SK-N-SH (cell line): ENCODE measurements at regions of chr5 and their contacts with region 1.

Region 1: GRCh38 chr5:138449501-138450239 is 10.8 kb downstream of the REEP2 start:
- DNase-seq: peak; percentile 96
- H3K4me3 ChIP-seq: peak overlapping the region in 1 of 2 experiments; percentile 34; a peak in 1 of 4 replicates
- H3K27ac ChIP-seq: peak overlapping the region in 1 of 2 experiments; percentile 8; a peak in 1 of 4 replicates
- H3K4me1 ChIP-seq: peaks cover 13 to 19% of the 10 kb centered on the region in 2 experiments; a peak in 3 of 4 replicates
- H3K27me3 ChIP-seq: no peaks in the 10 kb centered on the region
- CTCF ChIP-seq: peak; percentile 91
- EP300 ChIP-seq: no peak
- RAD21 ChIP-seq: peak; percentile 89

Region 2: GRCh38 chr5:138438724-138439476 is 10.8 kb before region 1 on chr5 and contains the start of gene REEP2:
- CTCF ChIA-PET with region 1: interaction called, 36 read pairs
- POLR2A ChIA-PET with region 1: interaction called, 4 read pairs
- DNase-seq: peak; percentile 94
- H3K4me3 ChIP-seq: peak within 1 kb of the TSS; percentile 65 to 84
- H3K27ac ChIP-seq: peak within 1 kb of the TSS; percentile 18 to 84; a peak in 3 of 4 replicates
- H3K4me1 ChIP-seq: peaks cover 0 to 21% of the 10 kb centered on the region in 2 experiments; a peak in 1 of 4 replicates
- H3K27me3 ChIP-seq: no peaks in the 10 kb centered on the region
- CTCF ChIP-seq: no peak
- EP300 ChIP-seq: no peak
- RAD21 ChIP-seq: no peak
- polyA plus RNA-seq, gene REEP2: 25.4 and 31.2 TPM in 2 replicates

Region 3: GRCh38 chr5:138464008-138464387 is 14.3 kb after region 1 on chr5:
- CTCF ChIA-PET with region 1: interaction called, 131 read pairs
- POLR2A ChIA-PET with region 1: interaction called, 16 read pairs
- DNase-seq: peak; percentile 95
- H3K4me3 ChIP-seq: peak overlapping the region; percentile 81 to 83
- H3K27ac ChIP-seq: peak overlapping the region; percentile 96 to 99
- H3K4me1 ChIP-seq: peaks cover 9 to 19% of the 10 kb centered on the region in 2 experiments; a peak in 1 of 4 replicates
- H3K27me3 ChIP-seq: no peaks in the 10 kb centered on the region
- CTCF ChIP-seq: peak; percentile 85
- EP300 ChIP-seq: no peak
- RAD21 ChIP-seq: peak; percentile 64

Region 4: GRCh38 chr5:138469540-138470321 is 20.1 kb after region 1 on chr5:
- CTCF ChIA-PET with region 1: interaction called, 131 read pairs
- POLR2A ChIA-PET with region 1: interaction called, 16 read pairs
- DNase-seq: peak; percentile 39
- H3K4me3 ChIP-seq: no peak overlapping the region
- H3K27ac ChIP-seq: no peak overlapping the region
- H3K4me1 ChIP-seq: peaks cover 9 to 13% of the 10 kb centered on the region in 2 experiments; a peak in 1 of 4 replicates
- H3K27me3 ChIP-seq: no peaks in the 10 kb centered on the region
- CTCF ChIP-seq: no peak
- EP300 ChIP-seq: no peak
- RAD21 ChIP-seq: no peak

Region 5: DNA sequence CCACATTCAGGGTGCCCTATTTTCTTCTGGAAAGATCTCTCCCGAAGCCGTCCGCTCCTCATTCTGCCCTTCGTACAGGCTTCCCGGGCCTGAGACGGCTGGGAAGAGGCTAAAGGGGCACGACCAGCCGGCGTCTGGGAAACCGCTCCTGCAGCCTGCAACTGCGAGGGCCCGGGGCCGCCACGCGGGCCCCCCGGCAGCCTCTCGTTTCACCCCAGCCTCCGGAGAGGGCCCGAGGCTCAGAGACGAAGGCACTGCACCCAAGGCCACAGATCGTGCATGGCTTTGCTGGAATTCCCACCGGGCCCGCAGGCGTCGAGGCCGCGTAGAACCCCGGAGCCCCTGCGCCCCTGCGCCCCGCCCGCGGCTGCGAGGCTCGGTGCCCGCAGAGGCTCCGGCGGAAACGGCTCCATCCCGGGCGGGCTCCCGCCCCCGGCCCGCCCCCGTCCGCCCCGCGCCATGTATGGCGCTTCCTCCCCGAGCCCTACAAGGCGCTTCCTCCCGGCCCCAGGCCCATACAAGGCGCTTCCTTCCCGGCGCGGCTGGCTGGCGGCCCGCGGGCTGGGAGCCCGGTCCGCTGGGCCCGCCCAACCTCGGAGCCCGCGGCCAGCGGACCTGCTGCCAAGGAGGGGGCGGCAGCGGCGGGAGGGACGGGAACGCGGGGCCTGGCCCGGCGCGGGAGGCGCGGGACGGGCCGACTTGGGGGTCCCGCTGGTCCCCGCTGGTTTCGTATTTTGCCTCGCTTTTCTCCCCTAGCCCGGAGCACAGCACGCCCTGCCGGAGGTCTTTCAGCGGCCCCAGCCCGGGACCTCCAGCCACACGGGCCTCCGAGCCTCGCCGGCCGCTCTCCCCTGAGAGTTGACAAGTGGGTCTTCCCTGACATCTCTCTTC is 42.2 kb after region 1 on chr5:
- CTCF ChIA-PET with region 1: interaction called, 15 read pairs
- POLR2A ChIA-PET with region 1: no interaction called
- DNase-seq: peak; percentile 92
- H3K4me3 ChIP-seq: peak overlapping the region; percentile 47 to 61
- H3K27ac ChIP-seq: peak overlapping the region; percentile 25 to 85; a peak in 3 of 4 replicates
- H3K4me1 ChIP-seq: peaks cover 6 to 37% of the 10 kb centered on the region in 2 experiments; a peak in 2 of 4 replicates
- H3K27me3 ChIP-seq: no peaks in the 10 kb centered on the region
- CTCF ChIP-seq: no peak
- EP300 ChIP-seq: no peak
- RAD21 ChIP-seq: no peak

Region 6: DNA sequence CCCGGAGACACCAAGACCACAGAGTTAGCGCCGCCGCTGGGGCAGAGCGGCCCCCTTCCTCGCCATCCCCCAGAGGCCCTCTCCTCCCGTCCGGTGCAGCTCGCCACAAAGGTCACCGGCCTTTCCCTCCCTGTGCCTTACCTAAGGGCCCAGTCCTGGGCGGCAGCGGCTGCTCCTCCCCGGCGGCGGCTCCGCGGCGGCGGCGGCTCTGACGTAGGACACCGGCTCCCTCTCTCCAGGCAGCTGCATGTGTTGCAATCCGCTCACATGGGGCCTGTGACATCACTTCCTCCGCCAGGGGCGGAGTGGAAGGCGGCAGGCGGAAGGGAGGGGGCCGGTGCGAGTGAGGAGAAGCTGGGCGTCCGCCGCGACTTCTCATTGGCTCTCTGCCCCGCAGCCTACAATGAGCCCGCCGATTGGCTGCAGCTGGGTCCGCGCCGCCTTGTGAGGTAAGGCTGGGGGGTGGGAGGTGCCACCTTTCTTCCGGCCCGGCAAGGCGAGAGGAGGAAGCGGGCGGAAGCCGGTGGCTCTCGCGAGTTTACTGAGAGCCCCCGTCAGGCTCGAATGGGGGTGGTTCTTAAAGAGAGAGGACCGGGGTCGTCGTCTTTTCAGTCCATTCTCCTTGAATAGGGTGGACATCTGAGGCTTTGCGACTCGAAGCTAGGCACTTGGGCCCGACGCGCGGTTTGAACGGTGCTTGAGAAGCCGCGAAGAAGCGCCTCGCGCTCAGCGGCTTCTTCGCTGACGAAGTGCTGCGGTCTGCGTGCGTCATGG is 93.5 kb after region 1 on chr5 and contains the start of gene ETF1:
- CTCF ChIA-PET with region 1: interaction called, 35 read pairs
- POLR2A ChIA-PET with region 1: interaction called, 6 read pairs
- DNase-seq: peak; percentile 97
- H3K4me3 ChIP-seq: peak within 1 kb of the TSS; percentile 88 to 91
- H3K27ac ChIP-seq: peak within 1 kb of the TSS; percentile 96 to 97
- H3K4me1 ChIP-seq: peaks cover 18 to 25% of the 10 kb centered on the region in 2 experiments
- H3K27me3 ChIP-seq: no peaks in the 10 kb centered on the region
- CTCF ChIP-seq: no peak
- EP300 ChIP-seq: peak in 1 of 2 experiments; percentile 28; a peak in 1 of 4 replicates
- RAD21 ChIP-seq: no peak
- polyA plus RNA-seq, gene ETF1: 36.7 and 48.7 TPM in 2 replicates